Colonic mucosa (tissue), 4 donors: ENCODE measurements at regions of chr13 and their contacts with region 1.

Region 1: DNA sequence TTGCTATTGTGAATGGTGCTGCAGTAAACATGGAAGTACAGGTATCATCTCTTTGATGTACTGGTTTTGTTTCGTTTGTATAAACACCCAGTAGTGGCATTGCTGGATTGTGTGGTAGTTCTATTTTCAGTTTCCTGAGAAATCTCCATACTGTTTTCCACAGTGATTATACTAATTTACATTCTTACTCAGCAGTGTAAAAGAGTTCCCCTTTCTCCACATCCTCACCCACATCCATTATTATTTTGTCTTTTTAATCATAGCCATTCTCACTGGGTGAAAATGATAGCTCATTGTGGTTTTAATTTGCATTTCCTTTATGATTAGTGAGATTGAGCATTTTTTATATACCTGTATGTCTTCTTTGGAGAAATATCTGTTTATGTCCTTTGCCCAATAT is 62.3 kb upstream of the PARP4 start:
- DNase-seq: no peak
- H3K4me3 ChIP-seq: no peak overlapping the region
- H3K27ac ChIP-seq: no peak overlapping the region
- H3K4me1 ChIP-seq: no peaks in the 10 kb centered on the region
- H3K27me3 ChIP-seq: no peaks in the 10 kb centered on the region
- CTCF ChIP-seq: no peak

Region 2: DNA sequence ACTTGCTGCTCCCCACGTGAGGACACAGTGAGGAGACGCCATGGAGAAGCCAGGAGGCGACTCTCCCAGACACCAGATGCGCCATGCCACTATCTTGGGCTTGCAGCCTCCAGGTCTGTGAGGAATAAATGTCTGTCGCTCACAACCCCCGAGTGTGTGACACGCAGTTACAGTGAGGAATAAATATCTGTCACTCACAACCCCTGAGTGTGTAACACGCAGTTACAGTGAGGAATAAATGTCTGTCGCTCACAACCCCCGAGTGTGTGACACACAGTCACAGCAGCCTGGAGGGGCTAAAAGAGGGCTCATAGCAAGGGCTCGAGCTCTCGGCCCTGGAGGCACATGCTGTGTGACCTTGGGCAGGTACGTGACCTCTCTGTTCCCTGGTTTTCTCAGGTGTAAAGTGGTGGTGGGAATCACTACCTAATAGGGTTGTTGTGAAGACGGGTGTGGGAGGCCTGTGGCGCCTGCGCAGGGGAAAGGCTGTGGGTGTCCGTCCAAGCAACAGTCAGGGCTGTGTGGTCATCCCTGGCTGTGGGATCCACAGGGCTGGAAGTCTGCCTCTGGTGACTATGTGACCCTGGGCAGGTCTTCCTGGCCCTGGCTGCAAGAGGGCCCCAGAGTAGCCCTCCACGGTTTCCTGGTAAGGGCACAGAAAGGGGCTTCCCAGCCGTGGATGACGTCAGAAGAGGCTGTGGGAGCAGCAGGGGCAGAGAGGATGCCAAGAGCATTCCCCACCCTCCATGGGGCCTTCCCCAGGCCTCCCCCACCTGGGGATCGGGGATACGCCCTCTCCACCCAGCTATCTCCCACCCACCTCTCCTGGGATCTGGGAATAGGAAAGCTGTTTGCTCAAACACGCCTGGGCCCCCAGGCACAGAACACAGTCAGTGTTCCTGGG is 187.8 kb before region 1 on chr13:
- intact Hi-C with region 1: no loop called
- DNase-seq: no peak
- H3K4me3 ChIP-seq: no peak overlapping the region
- H3K27ac ChIP-seq: no peak overlapping the region
- H3K4me1 ChIP-seq: no peaks in the 10 kb centered on the region
- H3K27me3 ChIP-seq: no peaks in the 10 kb centered on the region
- CTCF ChIP-seq: no peak

Region 3: GRCh38 chr13:24632382-24633121 is 57.7 kb after region 1 on chr13:
- intact Hi-C with region 1: no loop called
- DNase-seq: no peak
- H3K4me3 ChIP-seq: no peak overlapping the region
- H3K27ac ChIP-seq: peak overlapping the region; percentile 32
- H3K4me1 ChIP-seq: peaks cover 6% of the 10 kb centered on the region
- H3K27me3 ChIP-seq: no peaks in the 10 kb centered on the region
- CTCF ChIP-seq: no peak

Region 4: GRCh38 chr13:24671386-24672107 is 96.7 kb after region 1 on chr13:
- intact Hi-C with region 1: loop called (anchors 10 kb)
- DNase-seq: peak; percentile 77
- H3K4me3 ChIP-seq: no peak overlapping the region
- H3K27ac ChIP-seq: peak overlapping the region; percentile 81
- H3K4me1 ChIP-seq: peaks cover 8% of the 10 kb centered on the region
- H3K27me3 ChIP-seq: no peaks in the 10 kb centered on the region
- CTCF ChIP-seq: peak; percentile 42

Region 5: GRCh38 chr13:24716011-24716410 is 141.2 kb after region 1 on chr13:
- intact Hi-C with region 1: loop called (anchors 2 kb)
- DNase-seq: no peak
- H3K4me3 ChIP-seq: no peak overlapping the region
- H3K27ac ChIP-seq: no peak overlapping the region
- H3K4me1 ChIP-seq: no peaks in the 10 kb centered on the region
- H3K27me3 ChIP-seq: no peaks in the 10 kb centered on the region
- CTCF ChIP-seq: no peak